T-cell (primary cell): ENCODE measurements at regions of chr2 and their contacts with region 1.

Region 1: DNA sequence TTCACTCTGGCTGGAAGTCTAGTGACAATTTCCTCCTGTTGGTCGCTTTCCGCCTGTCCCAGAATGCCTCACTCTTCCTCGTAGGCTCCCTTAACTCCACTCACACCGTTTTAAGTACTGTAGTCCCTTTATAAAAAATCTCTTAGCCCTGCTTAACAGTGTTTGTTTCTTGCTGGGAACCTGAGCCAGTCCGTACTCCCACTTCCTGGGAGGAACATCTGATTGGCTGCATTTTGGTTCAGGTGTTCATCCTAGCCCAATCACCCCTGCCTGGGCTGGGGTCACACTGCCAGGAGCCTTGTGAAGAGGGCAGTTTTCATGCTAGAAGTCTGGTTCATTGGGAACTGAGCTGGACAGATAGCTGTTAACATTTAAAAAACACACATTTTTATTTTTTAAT is 25.6 kb upstream of the TOGARAM2 start:
- DNase-seq: no peak
- ATAC-seq: no peak
- H3K4me3 ChIP-seq: no peak overlapping the region
- H3K4me3 Mint-ChIP-seq: no peak overlapping the region
- H3K27ac ChIP-seq: no peak overlapping the region
- H3K27ac Mint-ChIP-seq: no peak overlapping the region
- H3K4me1 ChIP-seq: peaks cover 0 to 6% of the 10 kb centered on the region in 2 experiments
- H3K4me1 Mint-ChIP-seq: peaks cover 7 to 13% (median 11%) of the 10 kb centered on the region in 3 donors
- H3K27me3 ChIP-seq: peaks cover 0 to 9% of the 10 kb centered on the region in 2 experiments
- H3K27me3 Mint-ChIP-seq: peaks cover 0 to 6% of the 10 kb centered on the region in 2 donors

Region 2: DNA sequence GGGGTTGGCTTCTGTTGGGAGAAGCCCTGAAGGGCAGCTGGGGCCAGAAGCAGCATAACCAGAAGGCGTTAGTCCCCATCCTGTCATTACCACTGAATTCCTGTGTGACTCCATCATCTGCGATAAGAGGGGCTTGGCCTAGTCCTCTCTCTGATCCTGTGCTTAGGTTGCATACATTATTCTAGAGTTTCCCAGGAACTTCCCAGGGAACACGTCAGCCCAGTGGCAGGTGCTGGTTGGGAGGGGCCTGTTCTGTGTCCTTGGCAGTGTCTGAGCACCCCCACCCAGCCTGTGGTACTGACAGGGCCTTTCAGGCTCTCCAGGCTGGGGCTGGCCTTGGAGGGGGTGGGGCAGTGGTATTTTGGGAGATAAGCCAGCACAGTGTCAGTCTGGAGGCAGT is 21.1 kb after region 1 on chr2:
- CTCF ChIA-PET with region 1: no interaction called
- POLR2A ChIA-PET with region 1: interaction called in 1 of 2 experiments, 12 read pairs
- DNase-seq: no peak
- ATAC-seq: no peak
- H3K4me3 ChIP-seq: no peak overlapping the region
- H3K4me3 Mint-ChIP-seq: no peak overlapping the region
- H3K27ac ChIP-seq: no peak overlapping the region
- H3K27ac Mint-ChIP-seq: no peak overlapping the region
- H3K4me1 ChIP-seq: peaks cover 0 to 8% of the 10 kb centered on the region in 2 experiments
- H3K4me1 Mint-ChIP-seq: peaks cover 4 to 15% (median 13%) of the 10 kb centered on the region in 3 donors
- H3K27me3 ChIP-seq: peaks cover 0 to 7% of the 10 kb centered on the region in 2 experiments
- H3K27me3 Mint-ChIP-seq: peaks cover 0 to 2% of the 10 kb centered on the region in 2 donors